ENCODE measurements at regions of chr11 and their contacts with region 1.

Region 1: GRCh38 chr11:18698341-18699268 is at the start of gene TMEM86A:
- DNase-seq: peak; percentile 95
- total RNA-seq, gene TMEM86A: 2.6 TPM

Region 2: GRCh38 chr11:18304745-18305144 is 393.9 kb before region 1 on chr11:
- intact Hi-C with region 1: no loop called
- DNase-seq: no peak

Region 3: GRCh38 chr11:18588297-18589252 is 110.0 kb before region 1 on chr11 and contains the start of gene UEVLD:
- intact Hi-C with region 1: loop called (anchors 5 kb)
- DNase-seq: peak; percentile 94
- total RNA-seq, gene UEVLD: 16.6 TPM

Region 4: GRCh38 chr11:18650859-18651557 is 47.6 kb before region 1 on chr11:
- intact Hi-C with region 1: no loop called
- DNase-seq: no peak

Region 5: GRCh38 chr11:18844753-18845367 is 146.3 kb after region 1 on chr11:
- intact Hi-C with region 1: no loop called
- DNase-seq: no peak